Calu3 (cell line): ENCODE measurements at regions of chr2 and their contacts with region 1.

Region 1: GRCh38 chr2:121736462-121737341 is at the start of gene NIFK:
- DNase-seq: peak; percentile 99
- H3K4me3 Mint-ChIP-seq: peak within 1 kb of the TSS; percentile 99
- H3K27ac Mint-ChIP-seq: peak within 1 kb of the TSS; percentile 96
- H3K4me1 Mint-ChIP-seq: peaks cover 10% of the 10 kb centered on the region
- H3K27me3 Mint-ChIP-seq: peaks cover 12% of the 10 kb centered on the region
- CTCF ChIP-seq: no peak
- total RNA-seq, gene NIFK: 82.9 and 95.2 TPM in 2 replicates

Region 2: DNA sequence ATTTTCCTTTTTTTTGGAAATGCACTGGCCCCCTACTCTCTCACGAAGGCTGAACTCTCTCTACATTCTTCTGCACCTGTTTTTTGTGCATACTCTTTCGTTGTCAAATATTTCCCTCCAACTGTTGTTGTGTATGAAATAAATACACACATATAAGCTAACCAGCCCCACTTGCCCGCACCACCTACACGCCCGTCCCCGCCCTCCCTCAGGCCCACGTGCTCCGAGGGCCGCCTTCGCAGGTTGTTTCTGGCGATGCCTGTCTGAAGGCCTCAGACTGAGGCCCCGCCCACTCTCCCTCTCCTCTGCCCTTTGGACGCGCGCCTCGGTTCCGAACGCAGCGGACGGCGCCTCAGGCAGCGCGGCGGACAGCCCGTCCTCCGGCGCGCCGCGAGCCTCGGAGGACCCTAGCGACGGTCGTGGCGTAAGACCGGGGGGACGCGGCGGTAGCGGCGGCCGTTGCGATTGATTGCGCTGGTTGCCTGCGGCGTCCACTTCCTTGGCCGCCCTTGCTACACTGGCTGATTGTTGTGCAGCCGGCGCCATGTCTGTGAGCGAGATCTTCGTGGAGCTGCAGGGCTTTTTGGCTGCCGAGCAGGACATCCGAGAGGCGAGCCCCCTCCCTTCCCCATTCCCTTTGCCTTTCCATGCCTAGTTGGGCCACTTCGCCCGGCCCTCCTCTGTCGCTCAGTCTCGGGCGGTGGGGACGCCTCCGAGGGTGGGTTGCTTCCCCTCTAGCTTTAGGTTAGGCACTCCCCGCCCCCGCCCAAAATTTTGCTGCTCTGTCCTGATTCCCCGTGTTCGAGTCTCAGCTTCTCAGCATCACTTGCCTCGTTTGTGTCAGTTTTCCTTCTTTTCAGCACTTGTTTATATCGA is 18.8 kb after region 1 on chr2 and contains the start of gene TSN:
- CTCF ChIA-PET with region 1: interaction called, 10 read pairs
- intact Hi-C with region 1: no loop called
- DNase-seq: peak; percentile 98
- H3K4me3 Mint-ChIP-seq: peak within 1 kb of the TSS; percentile 79
- H3K27ac Mint-ChIP-seq: peak within 1 kb of the TSS; percentile 95
- H3K4me1 Mint-ChIP-seq: peaks cover 8% of the 10 kb centered on the region
- H3K27me3 Mint-ChIP-seq: no peaks in the 10 kb centered on the region
- CTCF ChIP-seq: no peak
- total RNA-seq, gene TSN: 125 and 142 TPM in 2 replicates

Region 3: DNA sequence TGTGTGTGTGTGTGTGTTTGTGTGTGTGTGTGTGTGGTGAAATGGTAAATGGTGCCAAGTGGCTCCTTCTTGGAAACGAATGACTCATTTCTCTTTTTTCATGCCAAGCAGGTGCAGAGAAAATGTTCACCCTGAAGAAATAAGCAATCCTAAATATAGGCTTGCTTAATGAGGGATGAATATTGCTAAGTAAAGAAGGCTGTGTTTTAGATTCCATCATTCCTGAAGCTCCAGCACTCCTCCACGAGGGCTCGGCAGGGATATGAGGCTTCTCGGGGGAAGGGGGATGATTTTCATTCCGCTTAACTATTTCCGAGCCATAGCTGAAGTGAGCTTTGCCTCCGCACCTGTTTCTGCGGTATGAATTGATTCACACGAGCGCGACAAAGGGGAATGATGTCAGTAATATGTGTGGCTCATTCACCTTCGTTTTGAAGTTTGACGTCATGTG is 91.6 kb after region 1 on chr2:
- CTCF ChIA-PET with region 1: no interaction called
- intact Hi-C with region 1: no loop called
- DNase-seq: no peak
- H3K4me3 Mint-ChIP-seq: no peak overlapping the region
- H3K27ac Mint-ChIP-seq: no peak overlapping the region
- H3K4me1 Mint-ChIP-seq: peaks cover 10% of the 10 kb centered on the region
- H3K27me3 Mint-ChIP-seq: peaks cover 15% of the 10 kb centered on the region
- CTCF ChIP-seq: no peak

Region 4: GRCh38 chr2:122528061-122528460 is 791.4 kb after region 1 on chr2:
- CTCF ChIA-PET with region 1: no interaction called
- intact Hi-C with region 1: no loop called
- DNase-seq: no peak
- H3K4me3 Mint-ChIP-seq: no peak overlapping the region
- H3K27ac Mint-ChIP-seq: no peak overlapping the region
- H3K4me1 Mint-ChIP-seq: no peaks in the 10 kb centered on the region
- H3K27me3 Mint-ChIP-seq: no peaks in the 10 kb centered on the region
- CTCF ChIP-seq: no peak